ENCODE measurements at regions of chr12 and their contacts with region 1.

Region 1: GRCh38 chr12:12008931-12009611 is 61.7 kb upstream of the BCL2L14 start:
- DNase-seq: peak; percentile 31
- ATAC-seq: no peak
- H3K4me3 ChIP-seq: no peak overlapping the region
- H3K27ac ChIP-seq: no peak overlapping the region
- H3K4me1 ChIP-seq: peaks cover 7% of the 10 kb centered on the region
- H3K27me3 ChIP-seq: peaks cover 4% of the 10 kb centered on the region
- CTCF ChIP-seq: no peak
- POLR2A ChIP-seq: no peak
- RAD21 ChIP-seq: no peak

Region 2: DNA sequence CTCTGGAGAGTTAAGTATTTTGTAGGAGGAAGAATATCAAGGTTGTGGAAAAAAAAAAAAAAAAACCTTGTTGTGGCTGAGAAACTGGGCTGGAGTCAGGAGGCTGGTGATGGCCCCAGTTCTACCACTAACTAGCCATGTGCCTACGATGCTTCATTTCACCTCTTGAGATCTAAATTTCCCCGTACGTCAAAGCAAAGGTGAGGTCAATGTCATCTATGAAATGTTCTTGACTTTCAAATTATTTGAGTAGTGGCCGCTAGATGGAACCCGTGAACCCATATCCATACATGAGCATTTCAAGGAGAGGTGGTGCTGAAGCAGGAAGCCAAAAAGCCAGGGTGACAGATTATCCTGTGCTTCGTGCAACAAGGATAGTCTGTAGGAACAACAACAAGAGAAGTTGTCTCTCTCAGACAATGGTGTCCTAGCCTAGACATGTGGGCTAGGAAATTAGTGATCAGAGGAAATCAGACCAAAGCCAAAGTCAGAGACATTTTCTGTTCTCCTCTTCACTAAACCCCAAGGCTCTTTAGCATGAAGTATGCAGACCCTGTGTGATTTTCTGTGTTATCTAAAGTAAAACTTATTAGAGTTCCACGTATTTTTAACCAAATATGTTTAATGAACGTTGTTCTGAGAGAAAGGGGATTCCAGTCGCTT is 455.1 kb before region 1 on chr12:
- CTCF ChIA-PET with region 1: no interaction called
- POLR2A ChIA-PET with region 1: interaction called, 17 read pairs
- dilution Hi-C with region 1: no loop called
- in situ Hi-C with region 1: no loop called
- intact Hi-C with region 1: no loop called
- DNase-seq: peak; percentile 59
- ATAC-seq: peak; percentile 91
- H3K4me3 ChIP-seq: no peak overlapping the region
- H3K27ac ChIP-seq: no peak overlapping the region
- H3K4me1 ChIP-seq: peaks cover 3% of the 10 kb centered on the region; the same call in 1 of the 2 replicates
- H3K27me3 ChIP-seq: peaks cover 34% of the 10 kb centered on the region
- CTCF ChIP-seq: peak; percentile 61
- POLR2A ChIP-seq: no peak
- RAD21 ChIP-seq: peak; percentile 58

Region 3: DNA sequence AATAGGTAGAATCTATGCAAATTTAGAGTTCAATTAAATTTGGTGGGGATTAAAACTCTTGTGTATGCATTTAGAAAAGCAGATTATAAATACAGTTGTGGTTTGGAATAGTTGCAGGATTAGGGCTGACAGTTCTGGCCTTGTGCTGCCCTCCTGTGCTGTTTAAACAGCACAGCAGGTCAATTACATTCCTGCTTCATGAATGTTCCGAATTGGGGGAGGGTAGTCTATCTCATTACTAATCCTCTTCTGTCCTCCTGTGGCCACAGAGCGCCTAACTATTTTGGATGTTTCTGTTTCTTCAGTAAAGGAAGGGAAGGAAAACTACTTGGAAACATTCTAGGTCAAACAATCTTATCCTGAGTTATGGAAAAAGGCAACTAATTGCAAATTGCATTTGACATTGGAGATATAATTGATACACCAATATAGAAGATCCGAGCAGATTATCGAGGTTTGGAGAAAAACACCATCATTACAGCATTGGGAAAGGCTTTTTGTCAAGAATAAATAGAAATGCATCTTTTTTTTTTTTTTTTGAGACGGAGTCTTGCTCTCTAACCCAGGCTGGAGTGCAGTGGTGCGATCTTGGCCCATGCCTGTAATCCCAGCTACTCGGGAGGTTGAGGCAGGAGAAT is 695.6 kb after region 1 on chr12:
- CTCF ChIA-PET with region 1: no interaction called
- POLR2A ChIA-PET with region 1: no interaction called
- dilution Hi-C with region 1: no loop called
- in situ Hi-C with region 1: no loop called
- intact Hi-C with region 1: no loop called
- DNase-seq: peak; percentile 95
- ATAC-seq: peak; percentile 100
- H3K4me3 ChIP-seq: no peak overlapping the region
- H3K27ac ChIP-seq: no peak overlapping the region
- H3K4me1 ChIP-seq: no peaks in the 10 kb centered on the region
- H3K27me3 ChIP-seq: no peaks in the 10 kb centered on the region
- CTCF ChIP-seq: peak; percentile 100; the same call in 1 of the 2 replicates
- POLR2A ChIP-seq: peak; percentile 68; the same call in 1 of the 2 replicates
- RAD21 ChIP-seq: peak; percentile 100